ENCODE measurements at regions of chr2 and their contacts with region 1.

Region 1: DNA sequence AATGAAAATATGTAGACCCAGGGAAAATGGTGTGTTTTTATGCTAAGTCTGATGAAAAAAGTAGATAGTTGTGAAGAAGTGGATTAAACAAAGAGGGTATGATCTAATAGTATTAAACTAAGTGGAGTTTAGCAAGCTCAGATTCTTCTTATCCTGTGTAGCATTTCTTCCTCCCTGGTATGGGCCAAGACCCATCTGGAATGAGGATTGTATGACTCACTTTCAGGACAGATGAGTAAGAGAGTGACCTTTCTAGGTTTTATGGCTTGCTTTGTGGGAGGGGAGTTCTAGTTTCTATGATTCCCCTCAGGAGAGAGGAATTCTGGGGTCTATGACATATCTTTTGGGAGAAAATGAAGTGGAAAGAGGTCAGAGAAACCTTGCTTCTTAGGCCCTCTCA is 550.1 kb downstream of the SPAG16 start:
- DNase-seq: no peak
- ATAC-seq: no peak
- H3K4me3 Mint-ChIP-seq: no peak overlapping the region
- H3K27ac Mint-ChIP-seq: no peak overlapping the region
- H3K4me1 Mint-ChIP-seq: no peaks in the 10 kb centered on the region
- H3K27me3 Mint-ChIP-seq: no peaks in the 10 kb centered on the region
- CTCF ChIP-seq: no peak

Region 2: DNA sequence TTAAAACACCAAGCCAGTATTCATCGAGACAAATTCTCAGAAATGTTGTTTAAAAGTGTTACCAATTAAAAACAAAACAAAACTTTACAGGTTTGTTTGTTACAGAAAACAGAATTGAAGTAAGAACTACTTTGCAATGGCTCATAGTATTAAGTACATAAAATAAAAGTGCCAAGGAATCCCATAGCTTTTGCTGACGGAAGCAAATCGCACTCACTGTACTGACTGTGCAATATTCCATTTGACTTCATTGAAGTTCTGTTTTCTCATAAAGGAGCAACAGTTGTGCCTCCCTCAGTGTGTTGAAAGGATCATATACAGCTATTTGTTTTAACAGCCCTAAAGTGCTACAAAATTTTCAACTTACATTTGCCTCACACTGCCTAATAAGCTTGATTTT is 42.3 kb before region 1 on chr2:
- CTCF ChIA-PET with region 1: no interaction called
- POLR2A ChIA-PET with region 1: no interaction called
- intact Hi-C with region 1: no loop called
- DNase-seq: no peak
- ATAC-seq: no peak
- H3K4me3 Mint-ChIP-seq: no peak overlapping the region
- H3K27ac Mint-ChIP-seq: no peak overlapping the region
- H3K4me1 Mint-ChIP-seq: no peaks in the 10 kb centered on the region
- H3K27me3 Mint-ChIP-seq: no peaks in the 10 kb centered on the region
- CTCF ChIP-seq: no peak

Region 3: GRCh38 chr2:213818436-213818835 is 15.9 kb before region 1 on chr2:
- CTCF ChIA-PET with region 1: no interaction called
- POLR2A ChIA-PET with region 1: interaction called, 10 read pairs
- intact Hi-C with region 1: no loop called
- DNase-seq: no peak
- ATAC-seq: no peak
- H3K4me3 Mint-ChIP-seq: no peak overlapping the region
- H3K27ac Mint-ChIP-seq: no peak overlapping the region
- H3K4me1 Mint-ChIP-seq: no peaks in the 10 kb centered on the region
- H3K27me3 Mint-ChIP-seq: no peaks in the 10 kb centered on the region
- CTCF ChIP-seq: no peak

Region 4: DNA sequence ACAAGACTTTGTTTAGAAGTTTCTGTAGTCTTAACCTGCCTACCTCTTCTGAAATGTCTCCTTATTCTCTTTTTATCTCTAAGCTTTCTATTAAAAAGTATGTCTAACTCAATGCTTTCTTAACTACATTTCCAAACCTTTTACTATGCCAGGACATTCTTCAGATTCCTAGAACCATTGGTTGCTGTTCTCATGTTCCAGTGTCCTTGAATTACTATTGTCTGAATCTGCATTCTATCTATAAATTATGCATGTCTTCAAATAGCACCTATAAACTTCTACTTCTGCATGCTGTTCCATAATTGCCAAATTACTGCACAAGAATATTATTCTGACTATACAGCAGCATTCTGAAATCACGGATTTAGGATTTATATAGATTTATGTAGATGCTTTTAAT is 410.5 kb after region 1 on chr2:
- CTCF ChIA-PET with region 1: no interaction called
- POLR2A ChIA-PET with region 1: no interaction called
- intact Hi-C with region 1: no loop called
- DNase-seq: no peak
- ATAC-seq: no peak
- H3K4me3 Mint-ChIP-seq: no peak overlapping the region
- H3K27ac Mint-ChIP-seq: no peak overlapping the region
- H3K4me1 Mint-ChIP-seq: no peaks in the 10 kb centered on the region
- H3K27me3 Mint-ChIP-seq: no peaks in the 10 kb centered on the region
- CTCF ChIP-seq: no peak